Activated CD4-positive, alpha-beta T cell treated with anti-CD3 and anti-CD28 coated beads for 36 hours (primary cell): ENCODE measurements at regions of chr1 and their contacts with region 1.

Region 1: DNA sequence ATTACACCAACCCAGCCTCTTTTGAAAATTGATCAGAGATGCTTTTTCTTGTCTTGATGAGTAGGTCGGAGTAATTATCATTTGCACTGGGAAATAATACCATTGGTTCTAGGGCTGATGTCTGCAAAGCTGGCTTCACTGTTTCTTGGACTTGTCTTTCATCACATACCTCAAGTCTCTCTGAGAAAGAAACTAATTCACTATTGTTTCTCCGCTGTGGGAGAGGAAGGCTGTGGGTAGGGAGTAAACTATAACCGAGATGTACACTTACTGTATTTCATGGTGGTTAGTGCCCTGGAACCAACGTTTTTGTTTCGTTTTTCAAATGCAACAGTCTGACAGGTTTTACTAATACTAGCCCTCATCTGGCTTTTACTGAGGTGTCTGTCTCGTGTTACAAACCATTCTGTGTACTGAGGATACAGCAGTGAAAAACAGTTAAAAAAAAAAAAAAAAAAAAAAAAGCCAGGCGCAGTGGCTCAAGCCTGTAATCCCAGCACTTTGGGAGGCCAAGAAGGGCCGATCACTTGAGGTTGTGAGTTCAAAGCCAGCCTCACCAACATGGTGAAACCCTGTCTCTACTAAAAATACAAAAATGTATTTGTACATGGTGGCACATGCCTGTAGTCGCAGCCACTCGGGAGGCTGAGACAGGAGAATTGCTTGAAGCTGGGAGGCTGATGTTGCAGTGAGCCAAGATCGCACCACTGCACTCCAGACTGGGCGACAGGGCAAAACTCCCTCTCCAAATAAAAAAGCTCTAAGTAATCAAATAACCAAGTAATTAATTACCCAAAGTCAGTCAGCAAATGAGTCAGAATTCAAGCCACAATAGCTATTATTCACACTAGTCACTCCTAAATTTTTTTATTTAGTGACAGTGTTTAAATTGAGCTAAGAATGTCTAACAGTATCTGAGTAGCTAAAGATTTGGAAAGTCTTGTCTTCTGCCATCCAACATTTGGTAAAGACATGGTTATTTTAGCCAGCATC is 23.3 kb downstream of the TOMM20 start:
- DNase-seq: peak; percentile 26
- ATAC-seq: peak; percentile 59
- H3K4me3 Mint-ChIP-seq: peak overlapping the region; percentile 60
- H3K27ac Mint-ChIP-seq: peak overlapping the region; percentile 56
- H3K4me1 Mint-ChIP-seq: peaks cover 44% of the 10 kb centered on the region
- H3K27me3 Mint-ChIP-seq: peaks cover 4% of the 10 kb centered on the region

Region 2: DNA sequence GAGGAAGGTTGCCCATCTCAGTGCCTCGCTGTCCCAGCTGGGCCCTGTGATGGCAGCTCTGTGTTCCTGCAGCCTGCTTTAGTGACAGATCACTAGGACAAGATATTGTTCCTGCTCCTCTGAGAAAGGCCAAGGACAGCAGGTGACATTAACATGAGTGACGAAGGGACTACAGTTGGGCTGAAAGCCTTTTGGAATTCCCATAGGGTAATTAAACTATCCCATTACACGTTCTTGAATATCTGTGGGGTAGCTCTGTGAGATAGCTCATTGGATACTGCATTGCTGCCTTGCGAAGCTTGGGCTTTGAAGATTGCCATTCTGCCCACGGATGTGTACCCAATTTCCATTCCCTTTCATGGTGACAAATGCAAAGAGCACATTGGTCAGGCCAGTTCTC is 810.3 kb before region 1 on chr1:
- CTCF ChIA-PET with region 1: no interaction called
- POLR2A ChIA-PET with region 1: no interaction called
- intact Hi-C with region 1: no loop called
- DNase-seq: no peak
- ATAC-seq: no peak
- H3K4me3 Mint-ChIP-seq: no peak overlapping the region
- H3K27ac Mint-ChIP-seq: no peak overlapping the region
- H3K4me1 Mint-ChIP-seq: no peaks in the 10 kb centered on the region
- H3K27me3 Mint-ChIP-seq: peaks cover under 1% of the 10 kb centered on the region

Region 3: GRCh38 chr1:234722270-234722704 is 383.1 kb before region 1 on chr1:
- CTCF ChIA-PET with region 1: no interaction called
- POLR2A ChIA-PET with region 1: no interaction called
- intact Hi-C with region 1: no loop called
- DNase-seq: no peak
- ATAC-seq: no peak
- H3K4me3 Mint-ChIP-seq: no peak overlapping the region
- H3K27ac Mint-ChIP-seq: peak overlapping the region; percentile 69
- H3K4me1 Mint-ChIP-seq: peaks cover 62% of the 10 kb centered on the region
- H3K27me3 Mint-ChIP-seq: no peaks in the 10 kb centered on the region

Region 4: DNA sequence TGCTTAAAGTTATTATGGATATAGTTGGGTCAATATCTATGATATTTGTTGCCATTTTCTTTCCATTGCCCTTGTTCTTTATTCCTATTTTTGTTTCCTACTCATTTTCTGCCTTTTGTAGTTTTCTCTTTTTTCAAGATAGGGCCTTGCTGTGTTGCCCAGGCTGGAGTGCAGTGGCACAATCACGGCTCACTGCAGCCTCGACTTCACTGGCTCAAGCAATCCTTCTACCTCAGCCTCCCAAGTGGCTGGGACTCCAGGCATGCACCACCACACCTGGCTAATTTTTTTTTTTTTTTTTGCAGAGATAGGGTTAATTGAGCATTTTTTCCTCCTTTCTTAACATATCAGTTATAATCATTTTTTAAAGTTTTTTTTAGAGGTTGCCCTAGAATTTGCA is 69.4 kb before region 1 on chr1:
- CTCF ChIA-PET with region 1: no interaction called
- POLR2A ChIA-PET with region 1: no interaction called
- intact Hi-C with region 1: no loop called
- DNase-seq: no peak
- ATAC-seq: no peak
- H3K4me3 Mint-ChIP-seq: no peak overlapping the region
- H3K27ac Mint-ChIP-seq: no peak overlapping the region
- H3K4me1 Mint-ChIP-seq: peaks cover 9% of the 10 kb centered on the region
- H3K27me3 Mint-ChIP-seq: no peaks in the 10 kb centered on the region

Region 5: GRCh38 chr1:235050911-235051360 is 54.4 kb before region 1 on chr1:
- CTCF ChIA-PET with region 1: no interaction called
- POLR2A ChIA-PET with region 1: no interaction called
- intact Hi-C with region 1: no loop called
- DNase-seq: peak; percentile 62
- ATAC-seq: peak; percentile 70
- H3K4me3 Mint-ChIP-seq: no peak overlapping the region
- H3K27ac Mint-ChIP-seq: peak overlapping the region; percentile 37
- H3K4me1 Mint-ChIP-seq: peaks cover 51% of the 10 kb centered on the region
- H3K27me3 Mint-ChIP-seq: no peaks in the 10 kb centered on the region

Region 6: GRCh38 chr1:235093696-235094592 is 11.4 kb before region 1 on chr1:
- CTCF ChIA-PET with region 1: interaction called, 41 read pairs
- POLR2A ChIA-PET with region 1: no interaction called
- intact Hi-C with region 1: no loop called
- DNase-seq: peak; percentile 92
- ATAC-seq: peak; percentile 97
- H3K4me3 Mint-ChIP-seq: no peak overlapping the region
- H3K27ac Mint-ChIP-seq: no peak overlapping the region
- H3K4me1 Mint-ChIP-seq: peaks cover 8% of the 10 kb centered on the region
- H3K27me3 Mint-ChIP-seq: peaks cover 3% of the 10 kb centered on the region

Region 7: GRCh38 chr1:235122348-235122747 is 17.0 kb after region 1 on chr1:
- CTCF ChIA-PET with region 1: interaction called, 46 read pairs
- POLR2A ChIA-PET with region 1: interaction called, 16 read pairs
- intact Hi-C with region 1: loop called in 1 of 2 experiments (anchors 1 kb)
- DNase-seq: no peak
- ATAC-seq: no peak
- H3K4me3 Mint-ChIP-seq: no peak overlapping the region
- H3K27ac Mint-ChIP-seq: peak overlapping the region; percentile 17
- H3K4me1 Mint-ChIP-seq: peaks cover 49% of the 10 kb centered on the region
- H3K27me3 Mint-ChIP-seq: no peaks in the 10 kb centered on the region

Region 8: DNA sequence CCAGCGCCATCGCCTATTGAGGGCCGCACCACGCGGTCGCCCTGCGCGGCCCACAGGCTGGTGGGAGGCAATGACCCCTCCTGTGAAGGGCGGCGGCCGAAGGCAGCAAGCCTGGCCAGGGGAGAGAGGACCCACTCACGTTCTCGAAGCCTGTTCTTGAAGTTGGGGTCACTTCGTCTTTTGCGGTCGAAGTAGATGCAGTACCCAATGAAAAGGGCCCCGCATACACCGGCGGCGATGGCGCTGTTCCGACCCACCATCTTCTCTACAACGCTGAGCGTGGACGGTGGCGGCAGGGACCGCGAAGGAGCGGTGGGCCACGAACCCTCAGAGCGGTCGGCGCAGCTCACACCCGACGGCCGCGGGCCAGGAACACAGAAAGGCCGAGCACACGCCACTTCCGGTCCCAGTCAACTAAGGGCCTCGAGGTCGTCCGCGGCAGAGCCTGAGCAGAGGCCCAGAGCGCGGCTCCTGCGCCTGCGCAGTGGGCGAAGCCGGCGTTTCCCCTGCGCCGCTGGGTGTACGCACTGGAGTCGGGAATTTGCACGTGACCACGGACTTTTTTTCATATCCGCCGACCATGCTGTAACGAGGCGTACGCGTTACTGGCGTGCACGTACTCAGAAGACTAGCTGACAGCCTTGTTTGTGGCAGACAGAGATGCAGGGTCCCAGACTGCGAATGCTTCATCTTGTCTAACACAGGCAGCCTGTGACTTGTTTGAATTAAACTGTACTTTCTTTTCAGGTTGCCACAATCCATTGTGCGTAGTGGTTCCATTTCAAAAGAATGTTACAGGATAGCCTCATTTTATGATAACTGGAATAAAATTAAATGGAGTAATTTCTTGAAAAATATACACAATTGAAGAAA is 23.3 kb after region 1 on chr1 and contains the start of gene TOMM20:
- CTCF ChIA-PET with region 1: interaction called, 6 read pairs
- POLR2A ChIA-PET with region 1: interaction called, 3 read pairs
- intact Hi-C with region 1: loop called (anchors 1 to 2 kb)
- DNase-seq: peak; percentile 97
- ATAC-seq: peak; percentile 92
- H3K4me3 Mint-ChIP-seq: peak within 1 kb of the TSS; percentile 90
- H3K27ac Mint-ChIP-seq: peak within 1 kb of the TSS; percentile 98
- H3K4me1 Mint-ChIP-seq: peaks cover 41% of the 10 kb centered on the region
- H3K27me3 Mint-ChIP-seq: no peaks in the 10 kb centered on the region
- total RNA-seq, gene TOMM20: 62.1 to 148 TPM